AG04450 (cell line): ENCODE measurements at regions of chr6 and their contacts with region 1.

Region 1: GRCh38 chr6:593139-593906 is 63.6 kb downstream of the HUS1B start:
- DNase-seq: no peak
- H3K4me3 ChIP-seq: no peak overlapping the region
- H3K27ac ChIP-seq: no peak overlapping the region
- H3K27me3 ChIP-seq: no peaks in the 10 kb centered on the region
- CTCF ChIP-seq: peak; percentile 64

Region 2: GRCh38 chr6:340991-341827 is 252.1 kb before region 1 on chr6:
- CTCF ChIA-PET with region 1: no interaction called
- POLR2A ChIA-PET with region 1: no interaction called
- DNase-seq: no peak
- H3K4me3 ChIP-seq: no peak overlapping the region
- H3K27ac ChIP-seq: no peak overlapping the region
- H3K27me3 ChIP-seq: no peaks in the 10 kb centered on the region
- CTCF ChIP-seq: no peak

Region 3: DNA sequence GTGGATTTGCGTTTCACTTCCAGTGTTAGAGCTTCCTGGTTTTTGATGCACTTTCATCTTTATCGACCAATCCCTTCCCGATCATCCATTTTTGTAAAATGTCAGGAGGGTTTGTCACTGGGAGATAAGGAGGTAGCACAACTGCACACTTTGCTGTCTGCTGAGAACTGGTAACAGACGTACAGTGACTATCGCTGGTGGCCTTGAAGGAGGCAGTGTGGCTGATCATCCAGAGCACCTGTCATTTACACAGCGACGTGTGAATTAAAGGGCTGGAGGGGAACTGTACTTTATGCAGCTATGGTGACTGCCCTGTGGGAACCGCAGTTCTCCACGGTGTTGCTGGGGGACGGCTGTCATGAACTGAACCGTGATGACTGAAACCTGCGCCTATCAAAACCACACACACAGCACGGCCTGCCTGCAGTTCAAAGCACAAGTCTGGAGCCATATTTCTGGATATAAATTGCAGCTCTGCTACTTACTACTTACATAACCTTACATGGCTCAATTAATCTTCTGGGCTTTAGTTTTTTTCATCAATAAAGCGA is 13.6 kb after region 1 on chr6:
- CTCF ChIA-PET with region 1: interaction called, 12 read pairs
- POLR2A ChIA-PET with region 1: no interaction called
- DNase-seq: no peak
- H3K4me3 ChIP-seq: no peak overlapping the region
- H3K27ac ChIP-seq: no peak overlapping the region
- H3K27me3 ChIP-seq: no peaks in the 10 kb centered on the region
- CTCF ChIP-seq: no peak

Region 4: DNA sequence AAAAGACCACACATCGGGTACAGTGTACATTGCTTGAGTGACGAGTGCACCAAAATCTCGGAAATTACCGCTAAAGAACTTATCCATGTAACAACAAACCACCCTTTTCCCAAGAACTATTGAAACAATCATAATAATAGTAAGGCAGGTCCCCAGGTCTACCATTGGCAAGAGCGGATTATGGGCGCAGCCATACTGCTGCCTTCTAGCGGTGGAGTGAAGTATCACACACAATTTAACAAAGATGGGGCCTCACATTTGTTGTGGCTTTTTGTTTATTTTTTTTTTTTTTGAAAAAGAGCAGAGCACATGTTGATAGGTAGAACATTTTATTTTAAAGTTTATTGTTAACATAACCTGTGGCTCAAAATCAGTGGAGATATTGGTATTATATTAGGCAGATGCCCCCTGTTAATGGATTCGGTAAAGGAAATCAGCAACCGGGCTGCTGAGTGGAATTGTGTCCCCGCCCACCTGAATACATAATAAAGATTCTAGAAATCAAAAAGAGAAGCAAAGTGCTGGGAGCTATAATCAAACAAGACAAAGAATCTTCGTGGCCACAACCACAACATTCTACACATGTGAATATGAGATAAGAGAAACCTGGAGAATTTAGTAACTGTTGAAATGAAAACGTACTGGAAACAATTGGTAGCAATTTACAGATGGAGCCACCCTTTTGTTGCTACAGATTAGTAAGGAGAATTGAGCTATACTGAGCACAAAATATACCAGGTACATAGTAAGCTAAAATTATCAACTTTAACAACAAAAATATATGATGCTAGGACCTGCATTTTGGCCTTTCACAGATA is 193.8 kb after region 1 on chr6:
- CTCF ChIA-PET with region 1: interaction called, 17 read pairs
- POLR2A ChIA-PET with region 1: no interaction called
- DNase-seq: no peak
- H3K4me3 ChIP-seq: no peak overlapping the region
- H3K27ac ChIP-seq: no peak overlapping the region
- H3K27me3 ChIP-seq: no peaks in the 10 kb centered on the region
- CTCF ChIP-seq: peak; percentile 65

Region 5: GRCh38 chr6:1424306-1424928 is 831.1 kb after region 1 on chr6:
- CTCF ChIA-PET with region 1: interaction called, 40 read pairs
- POLR2A ChIA-PET with region 1: no interaction called
- DNase-seq: no peak
- H3K4me3 ChIP-seq: no peak overlapping the region
- H3K27ac ChIP-seq: no peak overlapping the region
- H3K27me3 ChIP-seq: peaks cover 12% of the 10 kb centered on the region
- CTCF ChIP-seq: peak; percentile 78